Head of caudate nucleus (tissue), 42 donors: ENCODE measurements at regions of chr17 and their contacts with region 1.

Region 1: GRCh38 chr17:63406689-63407330 is 39.3 kb downstream of the CYB561 start:
- DNase-seq: peak in 39 of 42 donors; percentile 42 to 93 (median 80)

Region 2: DNA sequence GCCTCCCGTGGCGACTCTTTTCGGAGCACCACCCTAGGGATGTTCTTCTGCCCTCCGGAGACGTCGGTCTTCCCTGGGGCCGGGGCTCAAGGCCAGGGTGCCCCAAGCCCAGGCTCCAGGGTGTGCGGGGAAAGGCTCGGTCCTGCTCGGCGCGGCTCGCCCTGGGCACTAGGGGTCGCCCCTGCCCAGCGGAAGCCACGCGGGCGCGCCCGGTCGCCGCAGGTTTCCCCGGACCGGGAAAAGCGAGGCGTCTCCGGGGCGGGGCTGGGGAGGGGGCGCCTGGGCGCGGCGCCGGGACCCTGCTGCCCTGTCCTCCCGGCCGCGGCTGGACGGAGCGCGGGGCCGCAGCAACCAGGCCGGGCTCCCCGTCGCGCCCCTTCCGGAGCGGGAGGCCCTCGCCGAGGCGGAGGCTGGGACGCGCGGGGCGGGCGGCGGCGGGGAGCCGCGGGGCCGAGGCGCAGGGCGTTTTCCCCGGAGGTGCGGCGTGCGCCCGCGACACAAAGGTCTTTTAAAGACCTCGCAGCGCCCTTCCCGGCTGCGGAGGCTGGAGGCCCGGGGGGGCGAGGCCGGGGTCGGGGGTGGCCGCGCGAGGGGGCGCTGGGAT is 702.9 kb before region 1 on chr17:
- intact Hi-C with region 1: loop called (anchors 5 kb)
- DNase-seq: peak; percentile 50 to 93 (median 84)

Region 3: GRCh38 chr17:62995377-62995885 is 411.4 kb before region 1 on chr17:
- intact Hi-C with region 1: loop called (anchors 10 kb)
- DNase-seq: peak in 36 of 42 donors; percentile 13 to 79 (median 45)

Region 4: GRCh38 chr17:63082273-63082993 is 324.4 kb before region 1 on chr17:
- intact Hi-C with region 1: loop called (anchors 5 kb)
- DNase-seq: no peak